MCF 10A (cell line): ENCODE measurements at regions of chr6 and their contacts with region 1.

Region 1: GRCh38 chr6:44475779-44476434 is 88.4 kb downstream of the CDC5L start:
- DNase-seq: peak; percentile 76
- H3K4me3 Mint-ChIP-seq: no peak overlapping the region
- H3K27ac Mint-ChIP-seq: no peak overlapping the region
- H3K4me1 Mint-ChIP-seq: no peaks in the 10 kb centered on the region
- H3K27me3 Mint-ChIP-seq: no peaks in the 10 kb centered on the region
- CTCF ChIP-seq: peak; percentile 95

Region 2: DNA sequence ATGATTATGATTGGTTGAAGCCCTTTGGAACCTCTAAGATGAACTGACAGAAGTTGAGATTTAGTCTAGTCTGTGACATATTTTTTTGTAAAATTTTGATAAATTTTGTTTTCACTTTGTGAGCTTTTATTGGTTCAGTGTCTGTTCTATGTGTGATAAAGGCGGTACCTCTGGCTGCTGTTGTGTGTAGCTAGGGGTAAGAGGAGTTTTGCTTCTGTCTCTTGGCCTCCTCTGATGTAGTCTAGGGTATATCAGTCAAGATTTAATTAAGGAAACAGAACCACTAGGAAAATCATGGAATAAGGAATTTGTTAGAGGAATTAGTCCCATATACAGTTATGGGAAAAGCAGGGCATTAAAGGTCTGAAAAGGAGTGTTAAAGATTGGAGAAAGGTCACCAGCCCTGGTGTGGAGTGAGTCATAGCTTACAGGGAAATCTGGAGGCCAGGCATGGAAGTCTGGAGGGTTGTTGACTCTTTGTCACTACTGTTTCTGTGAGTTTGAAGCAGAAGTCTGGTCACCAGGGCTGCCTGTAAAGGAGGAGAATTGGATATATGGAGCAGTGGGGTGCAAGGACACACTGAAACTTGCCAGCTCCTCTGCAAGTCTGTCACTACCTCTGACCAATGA is 59.9 kb before region 1 on chr6:
- CTCF ChIA-PET with region 1: no interaction called
- POLR2A ChIA-PET with region 1: no interaction called
- intact Hi-C with region 1: no loop called
- DNase-seq: peak; percentile 26
- H3K4me3 Mint-ChIP-seq: no peak overlapping the region
- H3K27ac Mint-ChIP-seq: peak overlapping the region; percentile 20
- H3K4me1 Mint-ChIP-seq: peaks cover 22% of the 10 kb centered on the region
- H3K27me3 Mint-ChIP-seq: no peaks in the 10 kb centered on the region
- CTCF ChIP-seq: no peak

Region 3: DNA sequence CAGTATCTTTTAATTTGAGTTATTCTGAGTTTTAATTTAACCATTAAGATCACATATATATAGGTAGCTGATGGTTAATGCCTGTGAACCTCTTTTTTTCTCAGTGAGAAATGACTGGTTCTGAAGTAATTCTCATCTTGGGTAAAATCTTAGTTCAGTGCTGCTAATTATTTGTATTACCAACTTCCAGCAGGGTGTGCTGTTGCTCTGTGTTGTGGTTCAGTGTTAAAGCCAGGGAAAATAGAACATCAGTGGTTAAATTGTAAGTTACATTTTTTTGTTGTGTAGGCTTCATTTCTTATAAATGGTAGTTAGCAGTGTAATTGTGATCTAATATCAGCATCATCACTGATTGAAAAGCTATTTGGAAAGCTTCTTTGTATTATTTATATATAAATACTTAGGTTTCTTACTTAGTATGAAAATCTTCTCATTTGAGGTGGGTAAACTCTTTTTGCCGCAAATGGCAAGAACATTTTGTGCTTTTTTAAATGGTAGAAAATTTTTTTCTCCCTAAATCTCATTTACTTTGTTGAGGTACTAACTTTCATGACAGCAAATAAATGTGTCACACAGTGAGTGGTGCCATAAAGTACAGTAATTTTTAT is 44.7 kb before region 1 on chr6:
- CTCF ChIA-PET with region 1: interaction called, 10 read pairs
- POLR2A ChIA-PET with region 1: no interaction called
- intact Hi-C with region 1: no loop called
- DNase-seq: peak; percentile 75
- H3K4me3 Mint-ChIP-seq: no peak overlapping the region
- H3K27ac Mint-ChIP-seq: no peak overlapping the region
- H3K4me1 Mint-ChIP-seq: no peaks in the 10 kb centered on the region
- H3K27me3 Mint-ChIP-seq: no peaks in the 10 kb centered on the region
- CTCF ChIP-seq: peak; percentile 60

Region 4: GRCh38 chr6:44489910-44490604 is 14.2 kb after region 1 on chr6:
- CTCF ChIA-PET with region 1: interaction called, 51 read pairs
- POLR2A ChIA-PET with region 1: interaction called, 5 read pairs
- intact Hi-C with region 1: loop called (anchors 1 kb)
- DNase-seq: peak; percentile 95
- H3K4me3 Mint-ChIP-seq: peak overlapping the region; percentile 66
- H3K27ac Mint-ChIP-seq: peak overlapping the region; percentile 95
- H3K4me1 Mint-ChIP-seq: peaks cover 54% of the 10 kb centered on the region
- H3K27me3 Mint-ChIP-seq: no peaks in the 10 kb centered on the region
- CTCF ChIP-seq: no peak

Region 5: DNA sequence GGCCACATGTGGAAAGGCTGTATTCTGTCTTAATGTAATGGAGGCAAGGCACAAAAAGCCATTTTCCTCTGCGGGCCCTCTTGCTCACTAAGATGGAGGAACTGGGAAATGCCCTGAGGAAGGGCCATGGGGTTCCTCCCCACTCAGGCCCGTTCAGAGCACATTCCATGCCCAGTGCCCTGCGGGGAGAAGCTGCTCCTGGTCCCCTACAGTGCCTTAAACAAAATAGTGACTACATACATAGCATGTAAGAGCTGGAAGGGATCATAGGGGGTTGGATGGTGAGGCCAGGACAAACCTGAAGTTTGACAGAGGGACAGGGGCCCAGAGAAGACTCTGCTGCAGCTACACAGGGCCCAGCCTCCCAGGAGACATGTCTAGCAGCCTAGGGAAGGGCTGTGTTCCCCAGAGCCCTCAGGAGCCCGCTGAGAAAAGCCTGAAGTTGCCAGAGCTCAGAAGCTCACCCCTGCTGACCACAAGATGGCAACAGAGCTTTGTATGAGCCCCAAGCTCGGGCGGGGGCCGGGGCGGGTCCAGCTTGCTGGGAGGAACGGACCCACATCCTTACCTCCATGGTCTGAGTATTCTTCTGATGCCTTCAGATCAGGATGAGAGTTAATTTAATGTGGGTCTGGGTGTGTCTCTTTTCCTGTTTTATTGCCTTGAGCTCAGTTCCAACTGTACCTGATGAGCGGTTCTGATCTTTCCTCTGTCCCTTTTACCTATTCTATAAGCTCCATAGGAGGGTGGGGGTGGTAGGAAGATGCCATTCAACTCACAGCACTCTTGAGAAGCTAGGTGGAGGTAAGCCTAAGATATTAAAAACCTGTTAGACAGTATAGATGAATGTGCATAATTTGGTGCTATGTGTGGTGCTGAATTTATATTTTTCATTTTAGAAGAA is 154.5 kb after region 1 on chr6:
- CTCF ChIA-PET with region 1: interaction called, 41 read pairs
- POLR2A ChIA-PET with region 1: interaction called, 3 read pairs
- intact Hi-C with region 1: loop called (anchors 1 kb)
- DNase-seq: peak; percentile 55
- H3K4me3 Mint-ChIP-seq: no peak overlapping the region
- H3K27ac Mint-ChIP-seq: no peak overlapping the region
- H3K4me1 Mint-ChIP-seq: no peaks in the 10 kb centered on the region
- H3K27me3 Mint-ChIP-seq: peaks cover 14% of the 10 kb centered on the region
- CTCF ChIP-seq: peak; percentile 67

Region 6: GRCh38 chr6:44655412-44656342 is 179.8 kb after region 1 on chr6:
- CTCF ChIA-PET with region 1: interaction called, 16 read pairs
- POLR2A ChIA-PET with region 1: interaction called, 4 read pairs
- intact Hi-C with region 1: loop called (anchors 1 kb)
- DNase-seq: peak; percentile 66
- H3K4me3 Mint-ChIP-seq: peak overlapping the region; percentile 3
- H3K27ac Mint-ChIP-seq: peak overlapping the region; percentile 76
- H3K4me1 Mint-ChIP-seq: peaks cover 13% of the 10 kb centered on the region
- H3K27me3 Mint-ChIP-seq: no peaks in the 10 kb centered on the region
- CTCF ChIP-seq: peak; percentile 97